A549 (cell line): ENCODE measurements at regions of chr12 and their contacts with region 1.

Region 1: DNA sequence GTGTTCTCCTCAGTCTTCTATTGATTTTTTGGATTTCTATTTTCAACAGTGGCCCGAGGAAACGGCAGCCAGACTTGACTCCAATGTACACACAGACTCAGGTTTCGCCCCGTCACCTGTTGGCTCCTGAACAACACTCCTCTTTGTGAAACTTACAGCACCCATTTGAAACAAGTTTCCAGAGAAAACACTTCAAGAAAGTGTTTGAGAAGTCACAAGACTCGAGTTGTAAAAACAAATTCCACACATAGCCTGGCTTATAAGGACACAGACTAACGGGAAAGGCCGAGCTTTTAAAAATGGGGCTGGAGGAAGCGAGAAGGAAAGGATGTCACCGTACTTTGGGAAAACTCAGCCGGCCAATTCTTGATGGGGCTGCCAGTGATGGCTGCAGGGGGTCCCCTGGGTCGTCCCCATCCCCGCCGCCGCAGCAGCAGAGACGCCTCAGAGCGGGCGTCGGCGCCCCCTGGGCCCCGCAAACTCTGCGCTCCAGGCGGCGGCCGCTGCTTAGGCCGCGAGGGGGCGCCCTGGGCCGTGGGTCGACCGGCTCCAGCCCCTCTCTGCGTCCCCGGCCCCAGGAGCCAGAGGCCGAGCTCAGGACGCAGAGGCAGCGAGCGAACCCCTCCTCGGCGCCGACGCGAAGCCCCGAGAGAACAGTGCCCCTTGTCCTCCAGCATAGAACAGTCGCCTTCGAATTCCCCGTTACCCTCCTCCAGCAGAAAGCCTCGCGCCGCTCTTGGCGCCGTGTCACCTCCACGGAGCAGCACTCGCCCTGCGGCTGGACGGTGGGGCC is 106.9 kb downstream of the PRICKLE1 start:
- DNase-seq: peak; percentile 67 to 79
- ATAC-seq: peak; percentile 91 to 97
- H3K4me3 ChIP-seq: peak overlapping the region; percentile 90
- H3K27ac ChIP-seq: peak overlapping the region; percentile 64 to 74; a peak in 5 of 6 replicates
- H3K4me1 ChIP-seq: 0 out of 3 replicates have a peak, but pooled peaks cover 3% of the 10 kb centered on the region
- CTCF ChIP-seq: peak; percentile 93
- EP300 ChIP-seq: no peak
- POLR2A ChIP-seq: no peak
- RAD21 ChIP-seq: peak; percentile 71 to 93

Region 2: DNA sequence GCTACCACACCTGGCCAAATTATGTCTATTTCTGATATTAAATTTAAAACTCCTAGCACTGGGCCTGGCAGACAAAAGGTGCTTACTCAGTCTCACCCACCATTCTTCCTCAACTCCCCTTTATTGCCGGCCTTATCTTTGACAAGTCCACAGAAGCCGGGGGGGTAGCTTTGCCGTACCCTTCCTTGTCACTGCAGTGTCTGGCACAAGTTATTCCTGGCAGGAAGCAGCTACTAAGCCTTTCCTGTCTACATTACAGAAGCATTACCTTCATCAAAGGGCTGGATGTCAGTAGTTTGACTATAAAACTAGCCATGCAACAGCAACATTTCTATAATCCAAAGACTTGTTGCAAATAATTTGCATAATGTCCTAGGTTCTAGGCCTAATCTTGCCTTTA is 20.2 kb before region 1 on chr12:
- CTCF ChIA-PET with region 1: interaction called, 64 read pairs
- POLR2A ChIA-PET with region 1: no interaction called
- DNase-seq: no peak
- ATAC-seq: no peak
- H3K4me3 ChIP-seq: no peak overlapping the region
- H3K27ac ChIP-seq: no peak overlapping the region
- H3K4me1 ChIP-seq: no peaks in the 10 kb centered on the region
- CTCF ChIP-seq: no peak
- EP300 ChIP-seq: no peak
- POLR2A ChIP-seq: no peak
- RAD21 ChIP-seq: no peak

Region 3: DNA sequence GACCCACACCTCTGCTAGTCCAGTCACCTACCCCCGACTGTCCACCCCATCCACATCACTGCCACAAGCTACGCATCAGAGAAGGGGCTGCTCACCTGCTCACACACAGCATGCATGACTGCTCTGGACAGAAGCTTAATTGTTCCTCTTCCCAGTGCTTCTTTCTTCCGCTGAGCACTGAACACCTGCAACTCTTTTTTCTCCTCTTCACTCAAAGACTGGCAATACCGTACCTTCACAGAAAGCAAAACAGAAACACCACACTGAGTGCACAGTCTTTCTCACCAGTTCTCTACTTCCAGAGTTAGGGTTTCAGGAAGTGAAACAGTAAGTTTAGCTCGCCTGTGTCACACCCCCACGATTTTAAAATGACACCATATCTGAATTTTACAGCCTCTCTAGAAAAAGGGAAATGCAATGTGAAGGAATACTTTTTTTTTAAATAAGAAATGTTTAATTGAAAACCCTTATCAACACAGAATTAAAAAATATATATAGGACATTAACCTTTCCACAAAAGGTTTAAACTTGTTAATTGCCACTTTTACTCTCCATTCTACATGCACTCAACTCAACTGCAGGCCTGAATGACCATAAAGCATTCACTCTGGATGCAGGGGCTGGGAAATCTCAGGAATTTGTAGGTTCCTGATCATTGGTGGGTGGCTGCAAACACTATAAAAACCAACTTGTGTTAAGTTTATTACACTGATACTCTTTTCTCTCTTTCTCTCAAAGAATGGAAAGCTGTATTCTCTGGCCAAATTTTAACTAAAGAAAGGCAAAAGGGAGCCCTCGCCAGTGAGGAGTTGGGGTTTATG is 13.1 kb before region 1 on chr12:
- CTCF ChIA-PET with region 1: interaction called, 64 read pairs
- POLR2A ChIA-PET with region 1: no interaction called
- DNase-seq: no peak
- ATAC-seq: 0 out of 6 replicates have a peak, but pooled peaks of 1 of the 2 experiments have one; percentile 29
- H3K4me3 ChIP-seq: no peak overlapping the region
- H3K27ac ChIP-seq: no peak overlapping the region
- H3K4me1 ChIP-seq: peaks cover 10% of the 10 kb centered on the region; the same call in 2 of the 3 replicates
- CTCF ChIP-seq: no peak
- EP300 ChIP-seq: no peak
- POLR2A ChIP-seq: no peak
- RAD21 ChIP-seq: no peak

Region 4: GRCh38 chr12:42496886-42497285 is 14.2 kb after region 1 on chr12:
- CTCF ChIA-PET with region 1: interaction called, 19 read pairs
- POLR2A ChIA-PET with region 1: no interaction called
- DNase-seq: no peak
- ATAC-seq: no peak
- H3K4me3 ChIP-seq: no peak overlapping the region
- H3K27ac ChIP-seq: no peak overlapping the region
- H3K4me1 ChIP-seq: no peaks in the 10 kb centered on the region
- CTCF ChIP-seq: no peak
- EP300 ChIP-seq: no peak
- POLR2A ChIP-seq: no peak
- RAD21 ChIP-seq: no peak

Region 5: GRCh38 chr12:42568952-42569915 is 86.6 kb after region 1 on chr12:
- CTCF ChIA-PET with region 1: interaction called, 69 read pairs
- POLR2A ChIA-PET with region 1: no interaction called
- DNase-seq: peak in 1 of 2 experiments; percentile 75
- ATAC-seq: peak; percentile 81 to 84
- H3K4me3 ChIP-seq: no peak overlapping the region
- H3K27ac ChIP-seq: no peak overlapping the region
- H3K4me1 ChIP-seq: no peaks in the 10 kb centered on the region
- CTCF ChIP-seq: peak; percentile 78
- EP300 ChIP-seq: no peak
- POLR2A ChIP-seq: no peak
- RAD21 ChIP-seq: peak; percentile 73 to 77

Region 6: GRCh38 chr12:43282106-43282505 is 799.5 kb after region 1 on chr12:
- CTCF ChIA-PET with region 1: interaction called, 12 read pairs
- POLR2A ChIA-PET with region 1: interaction called, 3 read pairs
- DNase-seq: peak in 1 of 2 experiments; percentile 25
- ATAC-seq: no peak
- H3K4me3 ChIP-seq: no peak overlapping the region
- H3K27ac ChIP-seq: no peak overlapping the region
- H3K4me1 ChIP-seq: peaks cover 15% of the 10 kb centered on the region; the same call in 2 of the 3 replicates
- CTCF ChIP-seq: peak; percentile 52; the same call in 2 of the 3 replicates
- EP300 ChIP-seq: no peak
- POLR2A ChIP-seq: no peak
- RAD21 ChIP-seq: peak; percentile 71 to 83